Posterior vena cava (tissue), 2 donors: ENCODE measurements at regions of chr16 and their contacts with region 1.

Region 1: GRCh38 chr16:66872943-66873684 is 7.2 kb upstream of the PDP2 start:
- DNase-seq: peak; percentile 98

Region 2: GRCh38 chr16:66425651-66426050 is 447.5 kb before region 1 on chr16:
- intact Hi-C with region 1: loop called in 1 of 2 experiments (anchors 2 kb)
- DNase-seq: no peak

Region 3: GRCh38 chr16:66608241-66609138 is 264.6 kb before region 1 on chr16:
- intact Hi-C with region 1: loop called (anchors 5 to 10 kb)
- DNase-seq: peak; percentile 94

Region 4: GRCh38 chr16:66830422-66831404 is 42.4 kb before region 1 on chr16 and contains the start of gene NAE1:
- intact Hi-C with region 1: loop called in 1 of 2 experiments (anchors 5 kb)
- DNase-seq: peak; percentile 96
- total RNA-seq, gene NAE1: 37.4 to 37.6 TPM